HEK293 (cell line): ENCODE measurements at regions of chr10 and their contacts with region 1.

Region 1: DNA sequence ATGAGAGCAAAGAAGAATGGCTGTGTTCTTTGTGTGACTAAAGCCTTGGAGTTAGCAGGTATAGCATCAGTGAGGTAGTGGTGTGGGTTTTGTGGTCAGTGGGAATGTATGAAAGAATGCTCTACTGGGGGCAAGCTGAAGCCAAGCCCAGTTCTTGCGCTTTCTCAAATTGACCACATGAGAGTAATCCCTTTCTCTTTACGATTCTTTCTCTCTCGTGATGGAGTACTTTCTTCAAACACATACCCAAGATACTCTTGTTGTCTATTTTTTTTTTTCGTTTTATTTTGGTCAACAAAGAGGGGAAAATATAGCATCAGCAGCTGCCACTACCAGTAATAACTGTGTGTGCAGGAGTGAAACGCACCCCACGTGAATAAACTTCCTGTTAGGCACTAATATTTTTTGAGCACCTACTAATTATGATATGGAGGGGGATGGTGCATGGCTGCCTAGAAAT is 8.4 kb upstream of the PANK1 start:
- H3K4me3 ChIP-seq: no peak overlapping the region
- H3K27ac ChIP-seq: no peak overlapping the region
- H3K4me1 ChIP-seq: no peaks in the 10 kb centered on the region
- CTCF ChIP-seq: no peak

Region 2: GRCh38 chr10:90032519-90032918 is 379.1 kb after region 1 on chr10:
- CTCF ChIA-PET with region 1: no interaction called
- POLR2A ChIA-PET with region 1: interaction called, 10 read pairs
- H3K4me3 ChIP-seq: no peak overlapping the region
- H3K27ac ChIP-seq: no peak overlapping the region
- H3K4me1 ChIP-seq: no peaks in the 10 kb centered on the region
- CTCF ChIP-seq: no peak

Region 3: DNA sequence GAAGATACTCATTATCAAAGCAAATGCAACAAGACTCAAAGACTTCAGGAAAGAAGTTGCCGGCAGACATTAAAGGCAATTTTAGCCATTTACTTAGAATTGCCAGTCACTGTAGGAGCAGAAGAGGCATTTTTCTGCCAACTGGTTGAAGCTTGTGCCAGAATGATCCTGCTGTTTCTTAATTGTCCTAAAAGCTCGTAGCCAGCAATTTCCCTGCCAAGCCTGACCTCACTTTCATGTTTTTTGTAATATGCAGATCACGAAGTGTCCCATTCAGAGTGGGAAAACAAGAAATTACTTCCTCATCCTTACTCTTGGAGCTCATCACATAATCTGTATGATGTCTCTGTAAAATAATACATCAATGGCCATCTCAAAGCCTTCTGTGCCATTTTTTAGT is 1398.4 kb after region 1 on chr10:
- CTCF ChIA-PET with region 1: no interaction called
- POLR2A ChIA-PET with region 1: no interaction called
- H3K4me3 ChIP-seq: no peak overlapping the region
- H3K27ac ChIP-seq: no peak overlapping the region
- H3K4me1 ChIP-seq: 0 out of 2 replicates have a peak, but pooled peaks cover 5% of the 10 kb centered on the region
- CTCF ChIP-seq: no peak